Heart left ventricle (tissue), 16 donors: ENCODE measurements at regions of chr1 and their contacts with region 1.

Region 1: DNA sequence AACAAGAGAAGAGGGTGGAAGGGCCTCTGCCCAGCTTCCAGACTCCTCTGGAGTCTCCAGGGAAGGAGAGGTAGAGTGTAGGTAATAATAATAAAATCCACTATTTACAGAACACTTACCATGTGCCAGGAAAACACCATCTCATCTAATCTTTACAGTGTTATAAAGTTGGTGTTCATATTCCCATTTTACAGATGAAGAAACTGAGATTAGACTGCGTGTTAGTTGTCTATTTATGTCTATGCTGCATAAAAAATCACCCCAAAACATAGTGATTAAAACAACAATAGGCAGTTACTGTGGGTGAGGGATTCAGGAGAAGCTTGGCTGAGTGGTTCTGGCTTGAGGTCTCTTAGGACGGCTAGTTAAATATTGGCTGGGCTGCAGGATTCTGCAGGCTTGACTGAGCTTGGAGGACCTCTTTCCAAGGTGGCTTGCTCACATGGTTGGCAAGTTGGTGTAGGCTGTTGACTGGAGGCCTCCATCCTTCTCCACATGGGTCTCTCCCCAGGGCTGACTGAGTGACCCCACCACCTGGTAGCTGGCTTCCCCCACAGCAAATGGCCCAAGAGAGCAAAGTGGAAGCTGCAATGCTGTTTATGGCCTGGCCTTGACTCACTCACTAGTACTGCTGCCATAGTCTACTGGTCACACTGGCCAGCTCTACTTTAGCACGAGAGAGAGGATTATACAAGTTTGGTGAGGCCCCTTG is 6.5 kb upstream of the ALX3 start:
- DNase-seq: no peak
- ATAC-seq: no peak
- H3K4me3 ChIP-seq: no peak overlapping the region
- H3K27ac ChIP-seq: no peak overlapping the region
- H3K4me1 ChIP-seq: peaks cover 0 to 6% (median 0%) of the 10 kb centered on the region in 12 donors
- H3K27me3 ChIP-seq: peaks cover 2 to 52% (median 19%) of the 10 kb centered on the region in 9 donors
- CTCF ChIP-seq: no peak
- POLR2A ChIP-seq: no peak

Region 2: GRCh38 chr1:110114837-110115183 is 37.9 kb after region 1 on chr1:
- intact Hi-C with region 1: loop called in 1 of 10 experiments (anchors 5 kb)
- DNase-seq: peak in 1 of 5 donors; percentile 8
- ATAC-seq: no peak
- H3K4me3 ChIP-seq: no peak overlapping the region
- H3K27ac ChIP-seq: no peak overlapping the region
- H3K4me1 ChIP-seq: no peaks in the 10 kb centered on the region
- H3K27me3 ChIP-seq: peaks cover 0 to 19% (median 0%) of the 10 kb centered on the region in 9 donors
- CTCF ChIP-seq: no peak
- POLR2A ChIP-seq: no peak